Aorta (tissue), 5 donors: ENCODE measurements at regions of chr2 and their contacts with region 1.

Region 1: DNA sequence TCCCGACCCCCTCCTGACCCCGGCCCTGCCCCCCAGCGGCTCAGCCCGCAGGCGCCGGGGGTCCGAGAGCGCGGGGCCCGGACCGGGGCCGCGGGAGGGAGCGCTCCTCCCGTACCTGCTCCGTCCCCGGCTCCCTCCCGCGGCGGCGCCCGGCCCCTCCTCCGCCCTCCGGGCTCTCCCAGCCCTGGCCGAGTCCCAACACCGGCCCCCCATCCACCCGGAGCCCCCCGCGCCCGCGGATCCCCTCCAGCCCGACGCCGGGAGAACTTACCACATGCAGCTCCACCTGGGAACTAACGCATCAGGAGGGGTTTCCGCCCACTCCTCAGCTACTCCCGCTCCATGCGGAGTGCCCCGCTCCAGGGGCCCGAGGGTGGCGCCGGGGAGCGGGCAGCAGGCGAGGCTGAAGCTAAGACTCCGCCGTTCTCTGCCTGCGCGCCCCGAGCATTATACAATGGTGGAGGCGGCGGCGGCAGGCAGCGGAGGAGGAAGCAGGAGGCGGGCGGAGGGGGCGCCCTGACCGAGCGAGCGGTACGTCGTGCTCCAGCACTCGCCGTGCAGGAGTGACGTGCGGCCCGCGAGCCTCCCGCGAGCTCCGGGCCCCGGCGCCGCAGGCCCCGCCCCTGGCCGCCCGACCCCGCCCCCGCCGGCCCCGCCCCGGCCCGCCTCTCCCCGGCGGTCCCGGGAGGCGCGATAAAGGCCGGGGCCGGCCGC is at the start of gene SERTAD2:
- DNase-seq: peak; percentile 94 to 95
- ATAC-seq: peak; percentile 95
- H3K4me3 ChIP-seq: peak within 1 kb of the TSS; percentile 79 to 97
- H3K27ac ChIP-seq: peak within 1 kb of the TSS; percentile 95 to 97
- H3K4me1 ChIP-seq: no peaks in the 10 kb centered on the region
- H3K27me3 ChIP-seq: no peaks in the 10 kb centered on the region
- total RNA-seq, gene SERTAD2: 23.5 to 27.4 TPM

Region 2: DNA sequence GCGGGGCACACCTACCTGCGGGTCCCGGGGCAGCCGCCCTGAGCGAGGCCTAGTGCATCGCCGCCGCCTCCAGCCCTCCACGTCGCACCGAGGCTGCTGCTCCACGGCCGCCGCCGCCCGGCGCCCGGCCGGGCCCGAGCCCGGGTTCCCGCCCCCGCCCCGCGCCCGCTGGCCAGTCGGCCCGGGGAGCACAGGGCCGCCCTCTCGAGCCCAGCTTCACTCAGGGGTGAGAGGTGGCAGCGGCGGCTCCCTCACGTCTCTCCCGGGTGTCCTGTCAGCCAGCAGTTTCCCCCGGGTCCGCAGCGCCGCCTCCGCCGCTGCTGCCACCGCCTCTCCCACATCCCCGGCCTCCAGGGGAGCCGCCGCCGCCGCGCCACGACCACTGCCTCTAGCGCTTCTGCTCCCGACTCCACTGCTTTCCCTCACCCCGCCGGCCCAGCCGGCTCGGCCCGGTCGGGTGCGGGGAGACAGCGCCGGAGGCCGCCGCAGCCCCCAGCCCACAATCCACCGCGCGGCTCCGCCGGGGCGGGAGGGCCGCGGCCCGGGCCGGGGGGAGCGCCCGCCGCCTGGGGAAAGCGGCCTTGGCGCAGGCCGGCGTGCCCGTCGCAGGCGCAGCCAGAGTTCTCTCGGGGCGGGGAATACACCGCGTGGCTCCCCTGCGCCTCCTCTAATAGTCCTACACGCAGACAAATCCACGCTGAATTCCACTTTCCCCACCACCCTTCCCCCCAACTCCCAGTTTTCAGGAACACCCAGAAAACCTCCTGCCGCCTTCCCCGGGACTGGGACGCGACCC is 634.4 kb before region 1 on chr2 and contains the start of gene VPS54:
- intact Hi-C with region 1: no loop called
- DNase-seq: peak; percentile 76 to 88
- ATAC-seq: peak; percentile 89
- H3K4me3 ChIP-seq: peak within 1 kb of the TSS; percentile 95 to 98
- H3K27ac ChIP-seq: peak within 1 kb of the TSS; percentile 87 to 94
- H3K4me1 ChIP-seq: peaks cover 3 to 4% of the 10 kb centered on the region in 2 donors
- H3K27me3 ChIP-seq: no peaks in the 10 kb centered on the region
- total RNA-seq, gene VPS54: 22.0 to 24.4 TPM

Region 3: DNA sequence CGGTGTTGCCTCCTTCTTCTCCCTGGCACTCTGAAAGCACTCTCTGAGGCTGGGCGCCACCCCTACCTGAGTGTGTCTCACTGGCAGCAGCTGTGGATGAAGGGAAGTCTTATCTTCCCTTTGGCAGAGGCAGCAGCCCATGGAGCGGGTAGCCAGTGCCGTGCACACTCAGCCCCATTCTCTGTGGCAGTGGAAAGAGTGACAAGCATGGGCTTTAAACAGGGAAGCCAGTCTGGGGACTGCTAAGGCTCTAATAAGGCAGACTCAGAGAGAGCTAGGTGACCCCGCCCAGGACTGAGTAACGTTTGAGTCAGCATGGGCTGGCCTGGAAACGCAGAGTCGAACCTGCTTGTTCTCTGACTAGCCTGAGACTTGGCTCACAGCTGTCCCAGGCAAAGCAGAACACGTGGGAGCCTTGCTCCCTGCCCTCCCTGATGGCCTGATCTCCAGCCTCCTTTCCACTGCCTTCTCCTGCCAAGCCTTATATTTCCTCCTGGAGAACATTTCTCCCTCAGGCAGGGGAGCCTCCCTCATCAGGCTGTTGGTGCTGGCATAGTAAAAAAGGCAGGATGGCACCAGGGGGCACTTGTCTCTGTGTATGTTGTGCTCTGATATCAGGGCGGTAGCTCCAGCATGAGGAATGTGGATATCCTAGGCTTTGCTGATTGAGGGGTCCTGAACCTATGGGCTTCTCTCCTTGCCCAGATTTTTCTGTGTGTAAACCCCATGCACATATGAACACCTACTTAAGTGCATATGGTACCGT is 293.4 kb before region 1 on chr2:
- intact Hi-C with region 1: no loop called
- DNase-seq: peak; percentile 93 to 94
- ATAC-seq: peak; percentile 93
- H3K4me3 ChIP-seq: no peak overlapping the region
- H3K27ac ChIP-seq: peak overlapping the region; percentile 16 to 18
- H3K4me1 ChIP-seq: no peaks in the 10 kb centered on the region
- H3K27me3 ChIP-seq: no peaks in the 10 kb centered on the region

Region 4: DNA sequence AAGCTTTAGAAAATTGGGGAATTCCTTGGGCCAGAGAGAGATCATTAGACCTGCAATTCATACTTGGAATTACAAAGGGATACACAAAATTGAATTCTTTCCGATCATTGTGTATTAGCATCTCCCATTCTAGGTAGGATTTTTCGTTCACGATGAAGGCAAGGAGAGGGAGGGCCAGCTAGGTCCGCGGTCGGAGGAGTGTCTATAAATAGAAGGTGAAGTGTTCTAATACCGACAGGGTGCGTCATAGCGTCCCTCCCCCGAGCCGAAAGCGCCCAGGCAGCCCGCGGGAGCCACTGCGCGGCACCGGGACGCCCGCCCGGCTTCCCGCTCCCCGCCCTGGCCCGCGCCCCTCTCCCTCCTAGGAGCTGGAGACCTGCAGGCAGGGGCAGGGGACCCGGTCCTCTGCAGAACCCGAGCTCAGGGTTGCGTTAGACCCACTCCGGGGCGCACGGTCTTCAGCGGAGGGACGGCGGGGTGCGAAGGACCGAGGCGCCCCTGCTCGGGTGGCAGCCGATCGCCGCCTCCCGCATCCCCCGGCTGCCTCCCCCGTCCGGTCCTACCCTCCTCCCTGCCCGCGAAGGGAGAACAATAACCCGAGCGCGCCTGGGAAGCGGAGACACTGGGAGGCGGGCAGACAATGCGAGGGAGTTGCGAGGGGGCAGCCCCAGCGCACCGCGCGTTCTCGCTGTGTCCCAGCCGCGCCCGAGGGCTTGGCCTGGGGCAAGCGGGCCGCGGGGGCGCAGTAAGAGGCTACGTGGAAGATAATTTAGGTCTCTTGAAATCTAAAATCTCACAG is 114.4 kb after region 1 on chr2:
- intact Hi-C with region 1: loop called (anchors 5 kb)
- DNase-seq: peak; percentile 94 to 95
- ATAC-seq: peak; percentile 97
- H3K4me3 ChIP-seq: peak overlapping the region; percentile 50 to 95
- H3K27ac ChIP-seq: peak overlapping the region; percentile 87 to 93
- H3K4me1 ChIP-seq: no peaks in the 10 kb centered on the region
- H3K27me3 ChIP-seq: no peaks in the 10 kb centered on the region